Activated T-helper 2 cell treated with anti-CD3 and anti-CD28 coated beads, Interferon-gamma antibody, Interleukin-2, Interleukin-4, amounts not matched to agents 10 μg/mL and 5 μg/mL and 100 μg/mL, durations not matched to agents 14 hours and 24 hours and 36 hours (primary cell): ENCODE measurements at regions of chr1 and their contacts with region 1.

Region 1: DNA sequence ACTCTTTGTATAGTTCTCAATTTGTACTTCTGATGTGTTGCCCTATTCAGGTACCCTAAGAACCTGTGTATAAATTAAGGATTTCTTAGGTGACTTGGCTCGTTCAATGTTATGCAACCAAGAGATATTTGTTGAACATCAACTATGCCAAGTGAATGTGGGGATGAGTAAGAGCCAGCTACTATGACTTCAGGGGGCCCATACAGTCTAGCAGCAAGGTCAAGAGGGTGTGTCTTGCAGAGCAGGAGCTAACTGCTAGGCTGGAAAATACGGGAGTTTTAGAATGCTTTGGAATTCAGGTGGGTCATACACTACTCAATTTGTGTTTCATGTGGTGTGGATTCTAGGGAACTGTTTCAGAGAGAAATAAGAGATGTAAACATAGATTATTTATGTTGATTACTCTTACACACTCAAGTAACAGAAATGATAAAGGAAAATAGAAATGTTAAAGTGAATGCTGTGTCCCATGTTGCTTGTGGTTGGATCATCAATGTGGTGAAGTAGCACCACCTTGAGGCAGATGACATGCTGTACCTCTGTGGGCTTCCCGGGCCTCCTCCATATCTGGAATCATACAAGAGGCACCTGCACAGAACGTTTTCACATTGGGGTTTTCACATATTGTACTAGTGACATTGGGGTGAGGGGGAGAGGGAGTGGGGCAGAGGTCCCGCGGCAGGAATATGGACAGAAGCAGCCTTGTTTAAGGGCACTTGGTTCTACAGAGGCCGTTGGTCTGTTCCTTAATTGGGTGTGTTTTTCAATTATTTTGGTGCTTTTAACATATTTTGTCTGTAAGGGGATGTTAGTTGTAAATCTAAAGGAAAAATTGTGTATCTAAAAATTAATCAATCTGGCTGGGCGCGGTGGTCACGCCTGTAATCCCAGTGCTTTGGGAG is 12.4 kb downstream of the ARPC5 start:
- DNase-seq: peak; percentile 28
- H3K4me3 Mint-ChIP-seq: no peak overlapping the region
- H3K27ac Mint-ChIP-seq: peak overlapping the region; percentile 11
- H3K4me1 Mint-ChIP-seq: peaks cover 14% of the 10 kb centered on the region
- H3K27me3 Mint-ChIP-seq: no peaks in the 10 kb centered on the region

Region 2: DNA sequence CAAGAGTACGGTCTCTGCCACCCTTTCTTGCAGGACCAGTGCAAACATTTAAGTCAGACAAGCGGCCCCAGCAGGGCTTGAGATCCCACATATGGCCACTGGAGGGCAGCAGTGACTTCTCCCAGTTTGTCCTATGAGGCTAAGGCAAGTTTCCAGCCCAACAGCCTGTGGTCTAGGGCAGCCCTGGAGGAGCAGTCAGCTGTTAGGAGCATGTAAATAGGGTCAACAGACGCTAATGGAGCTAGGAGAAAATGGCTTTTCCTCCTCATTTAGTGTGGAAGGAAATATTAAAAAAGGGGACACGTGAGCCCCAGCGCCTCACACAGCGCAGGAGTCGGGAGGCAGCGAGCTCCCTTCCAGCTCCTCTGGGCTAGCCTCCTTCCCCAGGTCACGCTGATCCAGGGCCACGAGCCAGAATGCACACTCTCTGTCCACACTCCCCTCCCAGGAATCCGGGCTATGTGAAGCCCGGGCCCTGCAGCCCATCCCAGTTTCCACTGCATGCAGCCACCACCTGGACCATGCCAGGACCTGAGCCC is 341.5 kb before region 1 on chr1:
- intact Hi-C with region 1: loop called (anchors 10 kb)
- DNase-seq: peak; percentile 53
- H3K4me3 Mint-ChIP-seq: no peak overlapping the region
- H3K27ac Mint-ChIP-seq: no peak overlapping the region
- H3K4me1 Mint-ChIP-seq: no peaks in the 10 kb centered on the region
- H3K27me3 Mint-ChIP-seq: peaks cover 2% of the 10 kb centered on the region

Region 3: DNA sequence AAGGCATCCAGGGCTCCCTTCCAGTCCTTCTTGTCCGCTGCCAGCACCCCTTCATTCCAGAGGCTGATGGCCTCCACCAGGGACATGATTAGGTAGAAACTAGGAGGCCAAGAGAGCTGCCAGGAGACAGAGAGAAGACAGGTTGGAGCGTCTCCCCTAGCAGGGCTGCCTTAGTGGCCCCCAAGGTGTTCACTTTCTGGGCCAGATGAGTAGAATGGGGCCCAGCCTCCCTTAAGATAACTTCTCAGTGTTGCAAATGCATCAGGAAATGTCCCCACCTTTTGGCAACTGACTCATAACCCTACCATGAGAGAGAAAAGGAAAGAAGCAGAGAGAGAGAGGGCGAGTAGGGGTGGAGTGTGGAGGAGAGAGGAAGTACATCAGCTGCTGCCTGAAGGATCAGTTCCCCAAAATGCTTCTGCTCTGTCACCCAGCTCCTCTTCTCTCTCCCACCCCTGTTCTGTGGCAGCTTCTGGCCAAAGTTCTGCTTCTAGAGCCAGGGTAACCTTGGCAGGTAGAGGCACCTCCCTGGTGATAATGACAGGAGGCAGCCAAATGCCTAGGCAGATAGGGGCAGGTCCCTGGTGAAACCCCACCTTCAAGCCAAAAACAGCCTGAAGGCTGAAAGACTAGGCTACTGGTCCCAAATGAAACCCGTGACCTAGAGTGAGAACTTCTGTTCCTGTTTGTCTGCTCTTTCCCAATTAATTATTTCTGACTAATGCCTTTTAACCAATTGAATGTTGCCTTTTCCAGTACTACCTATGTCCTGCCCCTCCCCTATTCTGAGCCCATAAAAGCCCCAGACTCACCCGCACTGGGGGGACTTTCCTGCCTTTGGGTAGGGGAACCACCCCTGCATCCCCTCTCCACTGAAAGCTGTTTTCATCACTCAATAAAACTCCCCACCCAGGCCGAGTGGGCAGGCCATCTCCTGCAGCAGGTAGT is 32.6 kb before region 1 on chr1 and contains the start of gene NCF2:
- intact Hi-C with region 1: loop called (anchors 2 kb)
- DNase-seq: peak; percentile 56
- H3K4me3 Mint-ChIP-seq: peak within 1 kb of the TSS; percentile 37
- H3K27ac Mint-ChIP-seq: peak within 1 kb of the TSS; percentile 21
- H3K4me1 Mint-ChIP-seq: peaks cover 43% of the 10 kb centered on the region
- H3K27me3 Mint-ChIP-seq: no peaks in the 10 kb centered on the region
- total RNA-seq, gene NCF2: 2.2 and 2.6 TPM in 2 replicates

Region 4: GRCh38 chr1:183646776-183647175 is 23.6 kb after region 1 on chr1:
- intact Hi-C with region 1: loop called (anchors 2 kb)
- DNase-seq: no peak
- H3K4me3 Mint-ChIP-seq: no peak overlapping the region
- H3K27ac Mint-ChIP-seq: no peak overlapping the region
- H3K4me1 Mint-ChIP-seq: peaks cover 14% of the 10 kb centered on the region
- H3K27me3 Mint-ChIP-seq: no peaks in the 10 kb centered on the region

Region 5: GRCh38 chr1:183777328-183777727 is 154.2 kb after region 1 on chr1:
- intact Hi-C with region 1: no loop called
- DNase-seq: no peak
- H3K4me3 Mint-ChIP-seq: no peak overlapping the region
- H3K27ac Mint-ChIP-seq: no peak overlapping the region
- H3K4me1 Mint-ChIP-seq: no peaks in the 10 kb centered on the region
- H3K27me3 Mint-ChIP-seq: no peaks in the 10 kb centered on the region